ENCODE measurements at regions of chr13 and their contacts with region 1.

Region 1: GRCh38 chr13:37058910-37059847 is at the start of gene SUPT20H:
- DNase-seq: peak; percentile 97
- ATAC-seq: peak; percentile 98
- H3K4me3 Mint-ChIP-seq: peak within 1 kb of the TSS; percentile 98
- H3K27ac Mint-ChIP-seq: peak within 1 kb of the TSS; percentile 88
- H3K4me1 Mint-ChIP-seq: peaks cover 32% of the 10 kb centered on the region
- H3K27me3 Mint-ChIP-seq: no peaks in the 10 kb centered on the region
- total RNA-seq, gene SUPT20H: 67.2 to 69.4 TPM

Region 2: DNA sequence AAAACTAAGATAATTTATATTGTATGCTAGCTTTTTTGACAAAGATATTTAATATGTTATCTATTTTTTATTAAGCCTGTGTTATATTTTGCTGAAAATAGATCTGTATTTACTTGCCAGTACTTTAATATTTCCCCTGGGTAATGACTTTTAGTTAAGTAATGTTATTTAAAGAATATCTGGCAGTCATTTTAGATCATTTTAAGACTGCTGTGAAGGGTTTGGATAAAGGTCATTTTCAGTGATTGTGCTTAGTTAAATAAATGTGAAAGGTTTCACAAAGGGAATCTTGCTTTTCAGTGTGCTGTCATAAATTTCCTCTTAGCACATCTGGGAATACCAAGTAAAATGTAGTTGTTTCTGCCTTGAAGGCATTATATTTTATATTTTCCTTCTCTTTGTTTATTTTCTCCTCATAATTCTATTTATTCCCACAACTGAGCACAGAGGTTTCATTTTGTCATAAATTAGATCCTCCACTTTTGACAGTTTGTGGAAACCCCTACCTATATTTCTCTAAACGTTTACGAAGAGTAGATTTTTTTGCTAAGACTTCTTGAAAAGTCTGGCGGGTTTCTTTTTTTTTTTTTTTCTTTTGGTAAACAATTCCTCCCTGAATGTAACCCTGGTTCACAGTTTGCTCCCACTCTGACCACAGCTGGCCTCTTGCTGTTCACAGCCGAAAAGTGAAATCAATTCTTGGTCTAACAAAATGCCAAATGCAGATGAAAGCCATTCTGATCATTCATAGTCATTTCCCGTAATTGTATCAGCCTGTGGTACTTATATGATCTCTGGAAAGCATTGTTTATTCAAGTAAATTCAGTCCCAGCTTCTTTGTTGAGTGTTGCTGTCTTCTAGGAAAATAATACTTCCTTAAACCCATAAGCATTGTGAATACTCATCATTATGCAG is 1670.5 kb before region 1 on chr13:
- CTCF ChIA-PET with region 1: no interaction called
- POLR2A ChIA-PET with region 1: no interaction called
- intact Hi-C with region 1: no loop called
- DNase-seq: no peak
- ATAC-seq: no peak
- H3K4me3 Mint-ChIP-seq: no peak overlapping the region
- H3K27ac Mint-ChIP-seq: no peak overlapping the region
- H3K4me1 Mint-ChIP-seq: no peaks in the 10 kb centered on the region
- H3K27me3 Mint-ChIP-seq: no peaks in the 10 kb centered on the region

Region 3: GRCh38 chr13:36420437-36420891 is 638.7 kb before region 1 on chr13:
- CTCF ChIA-PET with region 1: no interaction called
- POLR2A ChIA-PET with region 1: no interaction called
- intact Hi-C with region 1: loop called in 1 of 2 experiments (anchors 2 kb)
- DNase-seq: peak; percentile 82
- ATAC-seq: peak; percentile 74
- H3K4me3 Mint-ChIP-seq: no peak overlapping the region
- H3K27ac Mint-ChIP-seq: peak overlapping the region; percentile 75
- H3K4me1 Mint-ChIP-seq: peaks cover 27% of the 10 kb centered on the region
- H3K27me3 Mint-ChIP-seq: peaks cover 48% of the 10 kb centered on the region

Region 4: GRCh38 chr13:36903925-36904595 is 155.1 kb before region 1 on chr13:
- CTCF ChIA-PET with region 1: no interaction called
- POLR2A ChIA-PET with region 1: no interaction called
- intact Hi-C with region 1: no loop called
- DNase-seq: no peak
- ATAC-seq: no peak
- H3K4me3 Mint-ChIP-seq: no peak overlapping the region
- H3K27ac Mint-ChIP-seq: no peak overlapping the region
- H3K4me1 Mint-ChIP-seq: no peaks in the 10 kb centered on the region
- H3K27me3 Mint-ChIP-seq: peaks cover 25% of the 10 kb centered on the region

Region 5: GRCh38 chr13:36999054-36999714 is 60.0 kb before region 1 on chr13 and contains the start of gene ALG5:
- CTCF ChIA-PET with region 1: no interaction called
- POLR2A ChIA-PET with region 1: no interaction called
- intact Hi-C with region 1: loop called (anchors 1 kb)
- DNase-seq: peak; percentile 94
- ATAC-seq: peak; percentile 66
- H3K4me3 Mint-ChIP-seq: peak within 1 kb of the TSS; percentile 97
- H3K27ac Mint-ChIP-seq: peak within 1 kb of the TSS; percentile 100
- H3K4me1 Mint-ChIP-seq: peaks cover 29% of the 10 kb centered on the region
- H3K27me3 Mint-ChIP-seq: no peaks in the 10 kb centered on the region
- total RNA-seq, gene ALG5: 21.1 to 28.3 TPM

Region 6: DNA sequence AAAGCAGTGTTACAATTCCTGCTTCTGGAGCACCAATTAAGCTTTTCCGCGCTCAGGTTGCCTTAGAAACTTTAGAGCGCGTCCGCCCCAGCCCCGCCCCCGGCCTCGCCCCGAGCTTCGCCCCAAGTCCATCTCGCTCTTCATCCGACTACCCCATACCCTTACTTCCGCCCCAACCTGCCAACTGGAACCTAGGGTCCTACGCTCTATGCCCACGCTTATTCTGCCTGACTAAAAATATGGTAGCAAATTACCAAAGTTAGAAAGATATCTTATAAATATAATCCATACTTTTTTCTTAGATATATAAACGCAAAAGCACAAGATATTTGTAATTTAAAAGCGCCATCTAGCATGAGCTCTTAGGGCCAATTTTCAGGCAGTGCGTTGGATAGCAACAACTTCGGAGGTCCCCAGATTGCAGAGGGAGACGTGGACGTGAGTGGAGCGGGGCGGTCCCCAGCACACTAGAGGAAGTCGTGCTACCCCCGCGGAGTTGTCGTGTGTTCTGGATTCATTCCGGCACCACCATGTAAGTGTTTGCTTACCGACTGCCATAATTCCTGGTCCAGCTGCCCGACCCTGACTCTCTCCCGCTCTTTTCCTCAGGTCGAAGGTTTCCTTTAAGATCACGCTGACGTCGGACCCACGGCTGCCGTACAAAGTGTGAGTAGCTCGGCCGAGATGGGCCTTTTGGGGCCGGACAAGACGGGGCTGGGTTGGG is 1290.4 kb after region 1 on chr13 and contains the start of gene UFM1:
- CTCF ChIA-PET with region 1: no interaction called
- POLR2A ChIA-PET with region 1: no interaction called
- intact Hi-C with region 1: loop called (anchors 1 to 5 kb)
- DNase-seq: peak; percentile 92
- ATAC-seq: peak; percentile 93
- H3K4me3 Mint-ChIP-seq: peak within 1 kb of the TSS; percentile 98
- H3K27ac Mint-ChIP-seq: peak within 1 kb of the TSS; percentile 99
- H3K4me1 Mint-ChIP-seq: peaks cover 35% of the 10 kb centered on the region
- H3K27me3 Mint-ChIP-seq: no peaks in the 10 kb centered on the region
- total RNA-seq, gene UFM1: 36.7 to 44.8 TPM

Measured in activated CD4-positive, alpha-beta T cell treated with anti-CD3 and anti-CD28 coated beads for 36 hours (primary cell).